ENCODE measurements at regions of chr7 and their contacts with region 1.

Region 1: DNA sequence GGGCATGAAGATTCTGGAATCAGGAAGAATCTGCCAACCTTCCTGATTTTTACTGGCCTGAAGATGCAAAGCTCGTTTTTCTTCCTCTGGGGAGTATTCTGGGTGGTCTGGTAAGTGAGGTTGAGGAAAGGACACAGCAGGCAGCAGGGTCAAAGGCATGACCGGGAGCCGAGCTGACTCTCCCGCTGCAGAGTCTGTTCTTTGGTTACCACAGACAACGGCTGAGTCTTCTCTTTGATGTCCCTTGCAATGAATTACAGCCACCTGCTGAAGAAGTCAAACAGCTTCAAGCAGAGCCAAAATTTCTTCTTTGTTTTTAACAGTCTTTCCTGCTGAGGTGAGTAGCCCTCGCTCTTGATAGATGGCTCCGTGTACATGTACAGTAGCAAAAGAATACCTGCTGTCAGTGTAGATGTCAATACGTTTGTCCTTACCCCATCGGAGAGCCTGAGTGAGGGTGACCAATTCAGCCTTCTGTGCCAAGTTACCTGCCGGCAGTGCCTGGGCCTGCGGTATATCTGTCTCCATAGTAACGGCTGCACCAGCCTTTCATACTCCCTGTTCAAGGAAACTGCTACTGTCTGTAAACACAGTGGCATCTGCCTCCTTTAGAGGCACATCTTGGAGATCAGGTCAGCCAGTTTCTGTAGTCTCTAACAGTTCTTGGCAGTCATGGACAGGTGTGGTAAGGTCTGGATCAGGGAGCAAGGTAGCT is 76.4 kb downstream of the PRR15 start:
- DNase-seq: no peak
- ATAC-seq: no peak

Region 2: DNA sequence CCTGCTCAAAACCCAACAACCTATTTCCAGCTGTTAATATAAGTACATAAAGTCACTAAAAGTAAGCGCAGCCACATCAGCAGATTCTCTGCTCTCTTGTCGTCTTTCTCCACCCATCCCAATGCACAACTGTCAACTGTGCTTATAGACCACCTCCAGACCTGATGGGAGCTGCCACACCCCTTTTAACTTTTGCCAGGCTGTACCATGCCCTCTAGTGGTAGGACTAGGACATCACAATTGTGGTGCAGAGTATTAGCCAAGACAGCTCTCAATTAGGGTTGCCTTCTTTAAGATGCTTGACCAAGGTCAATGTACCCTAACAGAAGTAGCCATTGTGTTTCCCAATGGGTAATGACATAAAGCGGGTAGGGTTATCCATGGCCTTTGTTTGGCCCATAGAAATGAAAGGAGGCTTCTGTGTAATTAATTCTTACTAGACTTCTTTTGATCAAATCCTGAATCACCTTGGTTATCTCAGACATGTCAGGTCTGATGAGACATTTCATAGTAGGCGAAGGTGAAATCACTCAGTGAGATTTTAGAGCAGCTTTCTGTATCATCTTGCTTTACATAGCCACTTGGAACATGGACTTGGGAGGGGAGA is 281.5 kb after region 1 on chr7:
- intact Hi-C with region 1: loop called (anchors 10 kb)
- DNase-seq: no peak
- ATAC-seq: peak; percentile 90

Measured in Right ventricle myocardium superior (tissue), 1 donor.